Ovary (tissue), 10 donors: ENCODE measurements at regions of chr13 and their contacts with region 1.

Region 1: GRCh38 chr13:94487043-94487442 is 7.6 kb upstream of the DCT start:
- DNase-seq: no peak
- H3K4me3 ChIP-seq: no peak overlapping the region
- H3K27ac ChIP-seq: no peak overlapping the region
- H3K4me1 ChIP-seq: no peaks in the 10 kb centered on the region
- H3K27me3 ChIP-seq: no peaks in the 10 kb centered on the region
- CTCF ChIP-seq: no peak
- EP300 ChIP-seq: no peak
- POLR2A ChIP-seq: no peak

Region 2: GRCh38 chr13:95087761-95088221 is 600.7 kb after region 1 on chr13:
- intact Hi-C with region 1: loop called in 1 of 4 experiments (anchors 5 kb)
- DNase-seq: no peak
- H3K4me3 ChIP-seq: no peak overlapping the region
- H3K27ac ChIP-seq: no peak overlapping the region
- H3K4me1 ChIP-seq: no peaks in the 10 kb centered on the region
- H3K27me3 ChIP-seq: no peaks in the 10 kb centered on the region
- CTCF ChIP-seq: no peak
- EP300 ChIP-seq: no peak
- POLR2A ChIP-seq: no peak